CD8-positive, alpha-beta memory T cell (primary cell): ENCODE measurements at regions of chr1 and their contacts with region 1.

Region 1: DNA sequence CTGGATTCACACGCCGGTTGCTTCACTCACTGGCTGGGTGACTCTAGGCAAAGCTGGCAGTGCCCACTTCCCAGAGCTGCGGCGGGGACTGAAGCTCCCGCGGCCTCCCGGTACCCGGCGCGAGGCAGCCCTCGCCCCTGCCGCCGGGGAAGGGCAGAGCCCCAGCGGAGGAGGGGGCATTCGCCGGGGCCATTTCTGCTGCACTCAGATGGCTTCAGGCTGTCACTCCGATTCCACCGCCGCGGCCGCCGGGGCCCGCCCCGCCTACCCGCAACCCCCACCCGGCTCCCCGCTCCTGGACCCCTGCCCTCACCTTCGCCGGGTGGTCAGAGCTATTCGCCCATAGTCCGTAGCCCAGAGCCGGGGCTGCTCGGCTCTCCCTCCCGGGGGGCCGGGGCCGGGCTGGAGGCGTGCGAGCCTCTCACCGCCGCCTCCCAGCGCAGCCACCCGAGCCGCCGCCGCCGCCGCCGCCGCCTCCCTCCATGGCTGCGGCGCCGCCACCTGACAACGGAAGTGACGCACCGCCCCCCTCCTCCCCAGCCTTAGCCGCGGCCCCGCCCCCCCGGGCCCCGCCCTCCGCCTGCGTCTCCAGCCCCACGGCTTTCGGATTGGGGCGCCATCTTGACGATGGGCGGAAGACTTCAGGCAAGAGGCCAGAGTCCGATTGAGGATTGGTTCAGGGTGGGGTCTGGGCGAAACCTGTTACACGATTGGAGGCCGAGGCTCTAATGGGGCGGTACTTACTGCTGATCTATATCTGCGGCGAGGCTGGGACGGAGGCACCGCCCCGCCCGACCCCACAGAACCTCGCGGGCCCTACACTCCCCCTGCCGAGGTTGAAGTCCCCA is at the start of gene STK40:
- DNase-seq: peak; percentile 95 to 99 (median 98)
- H3K4me3 ChIP-seq: peak within 1 kb of the TSS; percentile 98
- H3K4me3 Mint-ChIP-seq: peak within 1 kb of the TSS; percentile 85 to 97 (median 92)
- H3K27ac ChIP-seq: peak within 1 kb of the TSS; percentile 97
- H3K27ac Mint-ChIP-seq: peak within 1 kb of the TSS; percentile 95 to 99 (median 98)
- H3K4me1 ChIP-seq: peaks cover 44% of the 10 kb centered on the region
- H3K4me1 Mint-ChIP-seq: peaks cover 48 to 60% (median 58%) of the 10 kb centered on the region in 3 donors
- H3K27me3 ChIP-seq: no peaks in the 10 kb centered on the region
- H3K27me3 Mint-ChIP-seq: peaks cover 0 to 2% of the 10 kb centered on the region in 2 donors
- total RNA-seq, gene STK40: 52.9 to 56.8 TPM

Region 2: DNA sequence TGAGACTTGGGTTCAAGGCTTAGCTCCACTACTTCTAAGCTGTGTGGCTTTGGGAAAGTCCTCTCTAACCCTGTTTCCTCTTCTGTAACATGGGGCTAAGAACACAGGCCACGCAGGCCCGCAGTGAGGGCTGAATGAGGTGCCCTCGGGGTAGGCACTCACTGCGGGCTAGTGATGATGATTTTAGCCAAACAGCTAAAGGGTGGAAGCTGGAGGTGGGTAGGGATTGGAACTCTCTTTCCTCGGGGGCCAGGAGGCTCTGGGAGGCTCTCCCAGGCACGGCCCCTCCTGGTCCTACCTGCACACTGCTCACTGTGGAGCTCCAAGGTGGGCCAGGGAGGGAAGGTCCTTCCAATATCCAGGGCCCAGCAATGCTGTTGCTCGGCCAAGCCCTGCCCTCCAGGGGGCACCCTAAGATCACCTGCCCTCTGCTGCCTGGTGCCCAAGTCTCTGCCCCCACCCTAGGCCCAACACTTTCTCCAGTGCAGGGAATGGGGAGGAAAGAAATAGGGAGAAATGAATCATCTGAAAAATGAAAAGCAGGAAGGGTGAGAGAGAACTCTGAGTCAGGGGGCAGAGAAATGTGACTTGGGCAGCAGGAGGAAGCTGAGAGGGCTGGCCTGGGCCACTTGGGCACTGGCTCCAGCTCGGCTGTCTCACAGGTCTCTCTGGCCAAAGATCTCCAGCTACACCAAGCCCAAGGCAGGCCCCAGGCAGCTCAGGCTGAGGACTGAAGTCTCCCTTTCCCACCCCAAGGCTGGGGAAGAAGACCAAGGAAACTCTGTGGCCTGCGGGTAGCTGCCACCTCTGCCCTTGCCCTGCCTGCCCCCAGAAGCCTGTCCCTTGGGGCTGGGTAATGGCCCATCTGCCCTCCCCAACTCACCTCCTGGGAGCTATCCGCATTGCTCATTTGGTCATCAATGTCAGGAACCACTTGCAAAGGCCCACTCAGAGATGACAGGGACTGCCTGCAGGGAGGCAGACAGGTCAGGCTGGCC is 42.9 kb before region 1 on chr1:
- CTCF ChIA-PET with region 1: interaction called, 12 read pairs
- POLR2A ChIA-PET with region 1: interaction called, 3 read pairs
- DNase-seq: peak; percentile 41 to 70 (median 46)
- H3K4me3 ChIP-seq: no peak overlapping the region
- H3K4me3 Mint-ChIP-seq: no peak overlapping the region
- H3K27ac ChIP-seq: no peak overlapping the region
- H3K27ac Mint-ChIP-seq: peak overlapping the region in 4 of 8 donors; percentile 17 to 66 (median 55)
- H3K4me1 ChIP-seq: peaks cover 10% of the 10 kb centered on the region
- H3K4me1 Mint-ChIP-seq: peaks cover 3 to 9% (median 4%) of the 10 kb centered on the region in 3 donors
- H3K27me3 ChIP-seq: no peaks in the 10 kb centered on the region
- H3K27me3 Mint-ChIP-seq: no peaks in the 10 kb centered on the region

Region 3: DNA sequence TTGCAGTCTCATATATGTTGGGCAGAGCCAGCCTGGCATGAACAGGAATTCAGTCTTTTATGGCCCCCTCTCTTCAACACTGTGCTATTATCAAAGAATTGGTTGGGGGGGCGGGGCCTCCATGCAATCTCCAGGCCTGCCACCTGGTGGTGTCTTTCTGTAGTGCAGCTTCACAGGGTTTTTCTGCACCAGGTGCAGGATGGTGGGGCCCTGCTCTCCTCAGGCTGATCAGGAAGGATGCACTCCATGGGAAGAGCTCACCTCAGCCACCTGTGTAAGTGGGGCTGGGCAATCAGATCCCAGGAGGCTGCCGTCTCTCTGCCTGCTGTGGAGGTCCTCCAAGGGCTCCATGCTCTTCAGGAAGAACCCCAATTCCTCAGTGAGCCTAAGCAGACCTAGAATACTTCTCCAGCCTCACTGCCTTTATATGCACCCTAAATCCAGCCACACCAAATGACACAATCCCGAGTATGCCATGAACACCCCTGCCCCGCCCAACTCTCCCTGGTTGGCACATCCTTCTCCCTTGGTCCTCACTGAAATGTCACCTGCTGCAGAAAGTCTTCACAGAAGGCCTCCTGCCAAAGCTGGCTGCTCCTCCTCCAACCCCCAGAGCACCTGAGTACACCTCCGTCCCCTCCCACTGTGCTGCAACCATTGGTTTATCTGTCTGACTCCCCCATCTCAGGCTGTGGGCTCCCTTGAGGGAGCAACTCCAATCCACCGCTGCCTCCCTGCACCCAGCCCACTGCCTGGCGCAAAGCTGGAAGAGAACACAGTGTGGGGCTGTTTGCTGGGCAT is 16.4 kb before region 1 on chr1:
- CTCF ChIA-PET with region 1: interaction called, 38 read pairs
- POLR2A ChIA-PET with region 1: interaction called, 7 read pairs
- DNase-seq: peak; percentile 72 to 86 (median 79)
- H3K4me3 ChIP-seq: no peak overlapping the region
- H3K4me3 Mint-ChIP-seq: no peak overlapping the region
- H3K27ac ChIP-seq: peak overlapping the region; percentile 8
- H3K27ac Mint-ChIP-seq: peak overlapping the region; percentile 6 to 91 (median 84)
- H3K4me1 ChIP-seq: peaks cover 70% of the 10 kb centered on the region
- H3K4me1 Mint-ChIP-seq: peaks cover 56 to 71% (median 67%) of the 10 kb centered on the region in 3 donors
- H3K27me3 ChIP-seq: no peaks in the 10 kb centered on the region
- H3K27me3 Mint-ChIP-seq: no peaks in the 10 kb centered on the region

Region 4: DNA sequence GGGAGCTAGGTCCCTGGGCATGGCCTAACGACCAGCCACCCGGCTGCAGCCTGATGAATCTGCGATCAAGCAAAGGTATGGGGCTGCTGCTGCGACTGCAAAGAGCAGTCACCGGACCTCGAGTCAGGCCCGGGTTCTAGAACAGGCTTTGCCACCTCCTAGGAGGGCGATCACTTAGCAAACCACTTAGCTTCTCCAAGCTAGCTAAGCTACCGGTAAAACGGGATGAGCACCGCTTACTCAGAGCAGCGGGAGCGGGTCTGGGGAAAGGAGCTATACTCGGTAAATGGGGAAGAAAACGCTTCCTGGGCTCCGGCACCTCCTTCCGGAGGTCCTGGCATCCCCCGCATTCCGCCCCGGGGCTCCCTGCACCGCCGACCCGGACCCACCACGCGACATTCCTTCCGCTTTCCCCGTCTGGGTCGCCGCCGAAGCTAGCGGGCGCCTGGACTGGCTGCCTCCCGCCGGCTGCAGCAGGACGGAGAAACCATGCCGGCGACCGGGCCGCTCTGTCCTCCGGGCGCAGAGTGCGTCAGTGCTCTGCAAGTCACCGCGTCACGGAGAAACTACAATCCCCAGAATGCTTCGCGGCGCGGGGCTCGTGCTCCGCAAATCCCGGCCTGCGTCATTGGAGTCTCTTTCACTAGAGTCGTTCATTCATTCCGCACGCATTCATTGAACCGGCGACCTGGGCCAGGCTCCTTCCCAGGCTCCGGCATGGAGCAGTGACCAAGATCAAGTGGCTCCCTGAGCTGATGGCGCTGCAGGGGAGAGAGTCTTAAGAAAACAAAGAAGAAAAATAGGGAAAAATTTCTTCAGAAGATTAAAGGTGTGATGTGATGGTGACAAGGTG is 12.0 kb after region 1 on chr1 and contains the start of gene LSM10:
- CTCF ChIA-PET with region 1: interaction called, 23 read pairs
- POLR2A ChIA-PET with region 1: interaction called, 43 read pairs
- DNase-seq: peak; percentile 83 to 93 (median 84)
- H3K4me3 ChIP-seq: peak within 1 kb of the TSS; percentile 89
- H3K4me3 Mint-ChIP-seq: peak within 1 kb of the TSS; percentile 93 to 99 (median 97)
- H3K27ac ChIP-seq: peak within 1 kb of the TSS; percentile 95
- H3K27ac Mint-ChIP-seq: peak within 1 kb of the TSS; percentile 87 to 100 (median 99)
- H3K4me1 ChIP-seq: peaks cover 22% of the 10 kb centered on the region
- H3K4me1 Mint-ChIP-seq: peaks cover 30 to 64% (median 32%) of the 10 kb centered on the region in 3 donors
- H3K27me3 ChIP-seq: no peaks in the 10 kb centered on the region
- H3K27me3 Mint-ChIP-seq: no peaks in the 10 kb centered on the region
- total RNA-seq, gene LSM10: 75.3 to 81.4 TPM

Region 5: GRCh38 chr1:36436817-36437216 is 51.2 kb after region 1 on chr1:
- CTCF ChIA-PET with region 1: no interaction called
- POLR2A ChIA-PET with region 1: no interaction called
- DNase-seq: no peak
- H3K4me3 ChIP-seq: no peak overlapping the region
- H3K4me3 Mint-ChIP-seq: no peak overlapping the region
- H3K27ac ChIP-seq: no peak overlapping the region
- H3K27ac Mint-ChIP-seq: no peak overlapping the region
- H3K4me1 ChIP-seq: no peaks in the 10 kb centered on the region
- H3K4me1 Mint-ChIP-seq: no peaks in the 10 kb centered on the region
- H3K27me3 ChIP-seq: no peaks in the 10 kb centered on the region
- H3K27me3 Mint-ChIP-seq: peaks cover 0 to 1% of the 10 kb centered on the region in 2 donors